Activated CD8-positive, alpha-beta memory T cell treated with anti-CD3 and anti-CD28 coated beads, Interleukin-2, amount 10 ng/mL, durations not matched to agents 7 days and 5 days (primary cell): ENCODE measurements at regions of chr6 and their contacts with region 1.

Region 1: DNA sequence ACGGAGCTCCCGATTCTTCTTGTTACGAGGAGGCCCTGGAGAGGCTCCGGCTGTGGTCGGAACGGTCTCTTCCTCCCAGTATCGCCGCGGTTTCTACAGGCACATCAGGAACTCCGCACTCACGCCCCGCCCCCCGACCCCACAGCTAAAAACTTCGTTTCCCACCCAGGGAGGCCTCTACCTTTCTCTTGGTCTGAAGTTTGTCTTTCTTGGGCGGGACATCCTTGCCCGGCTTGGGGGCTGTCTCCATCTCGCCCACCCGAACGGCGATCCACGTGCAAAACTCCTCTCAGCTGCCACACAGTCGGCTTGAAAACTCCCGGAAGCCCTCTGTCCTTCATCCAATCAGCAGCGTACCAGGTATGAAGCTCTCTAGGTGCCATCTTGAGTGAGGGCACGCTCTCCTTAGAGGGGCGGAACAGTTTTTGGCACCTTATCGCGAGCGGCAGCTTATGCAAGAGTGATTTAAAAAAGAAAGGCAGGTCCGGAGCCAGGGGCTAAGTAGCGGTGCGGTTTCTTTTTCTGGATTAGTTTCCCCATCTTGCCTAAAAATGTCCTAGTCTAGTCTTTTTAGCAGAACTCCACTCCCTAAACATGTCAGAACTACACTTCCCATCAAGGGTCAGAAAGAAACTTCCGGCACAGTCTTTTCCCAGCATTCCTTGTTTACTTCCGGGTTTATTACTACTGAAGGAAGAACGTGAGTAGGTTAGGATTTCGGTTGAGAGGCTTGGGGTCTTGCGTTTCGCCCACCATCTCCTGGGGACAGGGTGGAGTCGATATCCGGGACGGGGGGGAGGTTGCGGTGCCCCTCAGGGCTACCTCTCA is at the starts of genes PFDN6 and WDR46:
- DNase-seq: peak; percentile 93
- ATAC-seq: peak; percentile 98
- H3K4me3 Mint-ChIP-seq: peak within 1 kb of the TSS; percentile 89
- H3K27ac Mint-ChIP-seq: peak within 1 kb of the TSS; percentile 89
- H3K4me1 Mint-ChIP-seq: peaks cover 42% of the 10 kb centered on the region
- H3K27me3 Mint-ChIP-seq: no peaks in the 10 kb centered on the region
- total RNA-seq, gene PFDN6: 67.8 to 90.3 TPM
- total RNA-seq, gene WDR46: 61.5 to 78.4 TPM

Region 2: GRCh38 chr6:33271458-33272274 is 17.5 kb before region 1 on chr6 and contains the starts of genes RPS18 and VPS52:
- CTCF ChIA-PET with region 1: interaction called, 58 read pairs
- DNase-seq: peak; percentile 96
- ATAC-seq: peak; percentile 90
- H3K4me3 Mint-ChIP-seq: peak within 1 kb of the TSS; percentile 88
- H3K27ac Mint-ChIP-seq: peak within 1 kb of the TSS; percentile 98
- H3K4me1 Mint-ChIP-seq: peaks cover 58% of the 10 kb centered on the region
- H3K27me3 Mint-ChIP-seq: no peaks in the 10 kb centered on the region
- total RNA-seq, gene RPS18: 2,808 to 3,161 TPM
- total RNA-seq, gene VPS52: 60.6 to 63.3 TPM

Region 3: DNA sequence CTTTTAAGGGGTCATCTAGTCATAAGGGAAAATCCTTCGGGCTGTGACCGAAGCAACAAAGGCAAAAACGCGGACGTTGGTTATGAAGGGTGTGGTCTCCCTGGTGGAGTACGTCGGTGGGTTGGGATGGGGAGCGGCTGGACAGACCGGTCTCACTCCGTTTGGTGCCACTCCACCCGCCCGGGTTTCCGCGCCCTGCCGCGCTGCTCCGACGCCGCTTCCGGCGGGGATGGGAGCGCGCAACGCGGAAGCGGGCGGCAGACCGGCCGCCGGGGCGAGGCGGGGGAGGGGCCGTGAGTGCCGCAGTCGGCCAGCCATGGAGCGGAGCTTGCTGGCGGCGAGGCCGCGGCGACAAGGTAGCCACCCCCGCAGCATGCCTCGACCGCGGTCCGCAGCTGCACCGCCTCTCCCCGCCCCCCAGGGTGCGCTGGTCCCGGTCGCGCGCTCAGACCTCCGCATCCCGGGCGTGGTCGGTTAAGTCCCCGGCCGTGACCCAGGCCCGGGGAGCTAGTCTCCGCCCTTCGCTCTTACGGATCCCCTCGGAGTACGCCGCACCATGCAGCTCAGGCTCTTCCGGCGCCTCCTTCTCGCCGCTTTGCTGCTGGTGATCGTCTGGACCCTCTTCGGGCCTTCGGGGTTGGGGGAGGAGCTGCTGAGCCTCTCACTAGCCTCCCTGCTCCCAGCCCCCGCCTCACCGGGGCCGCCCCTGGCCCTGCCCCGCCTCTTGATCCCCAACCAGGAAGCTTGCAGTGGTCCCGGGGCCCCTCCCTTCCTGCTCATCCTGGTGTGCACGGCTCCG is 12.1 kb before region 1 on chr6 and contains the start of gene B3GALT4:
- CTCF ChIA-PET with region 1: interaction called, 58 read pairs
- DNase-seq: peak; percentile 88
- ATAC-seq: peak; percentile 72
- H3K4me3 Mint-ChIP-seq: peak within 1 kb of the TSS; percentile 88
- H3K27ac Mint-ChIP-seq: peak within 1 kb of the TSS; percentile 97
- H3K4me1 Mint-ChIP-seq: peaks cover 60% of the 10 kb centered on the region
- H3K27me3 Mint-ChIP-seq: no peaks in the 10 kb centered on the region
- total RNA-seq, gene B3GALT4: 14.0 to 20.5 TPM

Region 4: GRCh38 chr6:33317669-33318425 is 28.7 kb after region 1 on chr6 and contains the start of gene ZBTB22:
- CTCF ChIA-PET with region 1: interaction called, 11 read pairs
- DNase-seq: peak; percentile 98
- ATAC-seq: peak; percentile 71
- H3K4me3 Mint-ChIP-seq: peak within 1 kb of the TSS; percentile 90
- H3K27ac Mint-ChIP-seq: peak within 1 kb of the TSS; percentile 91
- H3K4me1 Mint-ChIP-seq: peaks cover 72% of the 10 kb centered on the region
- H3K27me3 Mint-ChIP-seq: no peaks in the 10 kb centered on the region
- total RNA-seq, gene ZBTB22: 10.6 to 11.8 TPM

Region 5: GRCh38 chr6:33356295-33356694 is 67.2 kb after region 1 on chr6:
- CTCF ChIA-PET with region 1: no interaction called
- DNase-seq: no peak
- ATAC-seq: no peak
- H3K4me3 Mint-ChIP-seq: no peak overlapping the region
- H3K27ac Mint-ChIP-seq: no peak overlapping the region
- H3K4me1 Mint-ChIP-seq: no peaks in the 10 kb centered on the region
- H3K27me3 Mint-ChIP-seq: peaks cover 22% of the 10 kb centered on the region